ENCODE measurements at regions of chr12 and their contacts with region 1.

Region 1: GRCh38 chr12:64491718-64492117 is 39.8 kb downstream of the TBK1 start:
- DNase-seq: no peak
- H3K4me3 Mint-ChIP-seq: no peak overlapping the region
- H3K27ac Mint-ChIP-seq: peak overlapping the region; percentile 53
- H3K4me1 Mint-ChIP-seq: peaks cover 25% of the 10 kb centered on the region
- H3K27me3 Mint-ChIP-seq: no peaks in the 10 kb centered on the region

Region 2: DNA sequence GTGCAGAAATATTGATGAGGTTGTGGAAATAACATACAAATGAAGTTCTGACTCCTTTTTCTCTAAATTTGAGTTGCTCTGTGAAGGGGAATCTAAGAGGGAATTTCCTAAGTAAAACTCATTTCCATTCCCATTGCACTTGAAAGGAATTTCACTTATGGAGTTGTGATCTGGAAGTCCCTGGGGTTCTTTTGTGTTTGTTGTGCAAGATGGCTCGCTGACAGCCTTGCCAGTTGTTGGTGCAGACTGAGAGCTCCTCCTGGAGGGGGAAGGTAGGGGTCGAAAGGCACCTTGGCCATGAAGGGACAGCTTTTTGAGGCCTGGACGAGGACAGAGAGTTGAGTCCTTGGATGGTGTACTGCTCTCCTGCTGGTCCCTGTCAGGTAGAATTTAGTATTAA is 173.1 kb before region 1 on chr12:
- intact Hi-C with region 1: no loop called
- DNase-seq: no peak
- H3K4me3 Mint-ChIP-seq: no peak overlapping the region
- H3K27ac Mint-ChIP-seq: no peak overlapping the region
- H3K4me1 Mint-ChIP-seq: no peaks in the 10 kb centered on the region
- H3K27me3 Mint-ChIP-seq: no peaks in the 10 kb centered on the region

Region 3: GRCh38 chr12:64459394-64459891 is 32.3 kb before region 1 on chr12:
- intact Hi-C with region 1: loop called (anchors 2 kb)
- DNase-seq: no peak
- H3K4me3 Mint-ChIP-seq: peak overlapping the region; percentile 76
- H3K27ac Mint-ChIP-seq: peak overlapping the region; percentile 77
- H3K4me1 Mint-ChIP-seq: peaks cover 43% of the 10 kb centered on the region
- H3K27me3 Mint-ChIP-seq: no peaks in the 10 kb centered on the region

Region 4: DNA sequence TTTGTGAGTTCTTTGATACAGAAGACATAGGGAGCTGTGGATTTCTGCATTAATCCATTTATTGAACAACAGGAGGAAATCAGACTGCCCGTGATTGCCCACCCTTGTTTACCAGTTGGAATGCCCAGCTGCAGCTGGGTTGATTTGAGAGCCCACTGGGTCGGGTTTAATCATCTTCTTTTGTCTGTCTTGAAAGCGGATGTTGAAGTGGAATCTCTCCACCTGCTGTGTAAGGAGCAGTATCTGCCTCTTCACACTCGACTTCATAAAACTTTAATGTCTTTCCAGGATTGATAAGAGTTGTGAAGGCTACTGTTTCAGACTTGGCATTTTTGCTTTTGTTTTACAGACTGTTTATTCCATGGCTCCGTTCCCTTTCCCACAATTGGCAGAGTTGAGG is 372.6 kb after region 1 on chr12:
- intact Hi-C with region 1: no loop called
- DNase-seq: no peak
- H3K4me3 Mint-ChIP-seq: no peak overlapping the region
- H3K27ac Mint-ChIP-seq: no peak overlapping the region
- H3K4me1 Mint-ChIP-seq: peaks cover 2% of the 10 kb centered on the region
- H3K27me3 Mint-ChIP-seq: peaks cover 11% of the 10 kb centered on the region